Dorsolateral prefrontal cortex (tissue), 120 donors: ENCODE measurements at regions of chrX and their contacts with region 1.

Region 1: DNA sequence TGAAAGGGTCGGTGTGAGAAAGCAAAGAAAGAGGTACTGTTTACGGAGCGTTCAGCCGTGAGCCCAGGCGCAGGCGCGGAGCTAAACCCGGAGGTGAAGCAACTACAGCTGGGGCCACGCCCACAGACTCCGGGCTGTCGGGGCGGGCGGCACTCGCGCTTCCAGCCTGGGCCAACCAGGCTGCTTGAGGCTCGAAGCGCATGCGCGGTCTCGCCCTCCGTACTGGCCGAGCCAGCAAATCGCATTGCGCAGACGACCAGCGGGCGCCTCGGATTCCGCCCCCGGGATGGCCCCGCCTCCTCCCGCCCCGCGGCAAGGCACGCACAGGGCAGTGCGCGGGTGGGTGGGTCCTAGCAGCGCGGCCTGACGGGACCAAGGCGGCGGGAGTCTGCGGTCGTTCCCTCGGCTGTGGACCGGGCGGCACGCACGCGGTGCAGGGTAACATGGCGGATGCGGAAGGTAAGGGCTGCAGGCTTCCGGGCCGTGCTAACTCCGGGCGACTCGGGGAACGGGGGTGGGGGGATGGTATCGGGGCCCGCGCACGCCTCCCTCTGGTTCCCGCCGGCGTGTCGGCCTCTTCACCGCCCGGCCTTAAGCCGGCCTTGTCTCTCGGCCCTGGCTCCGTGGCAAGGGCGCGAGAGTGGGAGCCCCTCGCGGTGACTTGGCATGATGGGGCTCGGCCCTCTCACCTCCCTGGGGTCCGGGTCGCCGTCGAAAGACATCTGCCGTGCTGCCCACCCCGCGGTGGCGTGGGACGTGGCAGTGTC is at the start of gene DKC1:
- DNase-seq: peak; percentile 88 to 96 (median 93)
- H3K4me3 ChIP-seq: peak within 1 kb of the TSS; percentile 38 to 83 (median 69)
- H3K27ac ChIP-seq: peak within 1 kb of the TSS in 55 of 59 donors; percentile 33 to 87 (median 74)
- H3K27me3 ChIP-seq: peaks cover 0 to 30% (median 3%) of the 10 kb centered on the region in 45 donors
- CTCF ChIP-seq: peak in 16 of 56 donors; percentile 7 to 36 (median 16)
- total RNA-seq, gene DKC1: 14.4 to 34.7 (median 23.6) TPM

Region 2: DNA sequence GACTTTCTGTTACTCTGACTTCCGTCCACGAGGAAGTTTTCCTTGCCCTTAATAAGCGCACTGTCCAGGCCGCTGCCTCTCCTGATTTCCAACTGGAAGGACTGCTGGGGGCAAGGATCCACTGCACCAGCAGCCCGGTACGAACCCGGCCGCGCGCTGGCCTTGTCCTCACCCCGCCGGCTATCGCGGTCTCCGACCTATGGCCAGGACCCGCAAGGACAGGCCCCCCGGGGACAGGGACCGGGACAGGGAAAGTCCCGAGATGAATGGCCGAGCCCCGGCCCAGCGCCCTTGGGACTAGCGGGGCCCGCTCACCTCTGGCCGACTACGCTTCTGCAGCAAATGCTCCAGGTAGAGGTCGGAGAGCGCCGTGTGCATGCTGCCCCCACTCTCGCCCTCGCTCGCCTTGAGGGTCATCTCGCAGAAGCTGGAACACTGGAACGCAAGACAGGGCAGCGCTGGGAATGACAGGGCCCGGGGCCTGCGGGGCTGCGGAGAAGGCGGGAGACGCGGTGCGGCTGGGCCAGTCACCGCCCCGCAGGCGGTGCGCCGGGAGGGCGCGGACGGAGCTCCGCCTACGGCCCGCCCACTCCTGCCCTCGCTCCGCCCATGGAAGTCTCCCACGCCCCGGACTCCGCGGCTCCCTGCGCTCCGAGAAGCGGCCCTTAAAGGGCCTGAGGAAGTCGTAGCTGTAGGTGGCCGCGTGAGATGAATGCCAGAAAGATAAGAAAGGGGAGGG is 42.4 kb after region 1 on chrX and contains the start of gene MPP1:
- intact Hi-C with region 1: loop called (anchors 5 kb)
- DNase-seq: peak; percentile 40 to 84 (median 65)
- H3K4me3 ChIP-seq: peak within 1 kb of the TSS; percentile 38 to 82 (median 67)
- H3K27ac ChIP-seq: peak within 1 kb of the TSS in 53 of 59 donors; percentile 9 to 86 (median 61)
- H3K27me3 ChIP-seq: peaks cover 0 to 38% (median 2%) of the 10 kb centered on the region in 45 donors
- CTCF ChIP-seq: peak in 6 of 56 donors; percentile 3 to 21 (median 10)
- total RNA-seq, gene MPP1: 44.8 to 107 (median 75.0) TPM

Region 3: GRCh38 chrX:154900323-154900722 is 137.6 kb after region 1 on chrX:
- intact Hi-C with region 1: no loop called
- DNase-seq: no peak
- H3K4me3 ChIP-seq: no peak overlapping the region
- H3K27ac ChIP-seq: no peak overlapping the region
- H3K27me3 ChIP-seq: peaks cover 0 to 40% (median 4%) of the 10 kb centered on the region in 45 donors
- CTCF ChIP-seq: no peak